ENCODE measurements at regions of chr4 and their contacts with region 1.

Region 1: GRCh38 chr4:98995183-98996055 is at the start of gene METAP1:
- DNase-seq: peak; percentile 94

Region 2: GRCh38 chr4:98928505-98929340 is 66.7 kb before region 1 on chr4 and contains the start of gene EIF4E:
- CTCF ChIA-PET with region 1: interaction called, 4 read pairs
- POLR2A ChIA-PET with region 1: interaction called, 10 read pairs
- DNase-seq: peak; percentile 93

Region 3: DNA sequence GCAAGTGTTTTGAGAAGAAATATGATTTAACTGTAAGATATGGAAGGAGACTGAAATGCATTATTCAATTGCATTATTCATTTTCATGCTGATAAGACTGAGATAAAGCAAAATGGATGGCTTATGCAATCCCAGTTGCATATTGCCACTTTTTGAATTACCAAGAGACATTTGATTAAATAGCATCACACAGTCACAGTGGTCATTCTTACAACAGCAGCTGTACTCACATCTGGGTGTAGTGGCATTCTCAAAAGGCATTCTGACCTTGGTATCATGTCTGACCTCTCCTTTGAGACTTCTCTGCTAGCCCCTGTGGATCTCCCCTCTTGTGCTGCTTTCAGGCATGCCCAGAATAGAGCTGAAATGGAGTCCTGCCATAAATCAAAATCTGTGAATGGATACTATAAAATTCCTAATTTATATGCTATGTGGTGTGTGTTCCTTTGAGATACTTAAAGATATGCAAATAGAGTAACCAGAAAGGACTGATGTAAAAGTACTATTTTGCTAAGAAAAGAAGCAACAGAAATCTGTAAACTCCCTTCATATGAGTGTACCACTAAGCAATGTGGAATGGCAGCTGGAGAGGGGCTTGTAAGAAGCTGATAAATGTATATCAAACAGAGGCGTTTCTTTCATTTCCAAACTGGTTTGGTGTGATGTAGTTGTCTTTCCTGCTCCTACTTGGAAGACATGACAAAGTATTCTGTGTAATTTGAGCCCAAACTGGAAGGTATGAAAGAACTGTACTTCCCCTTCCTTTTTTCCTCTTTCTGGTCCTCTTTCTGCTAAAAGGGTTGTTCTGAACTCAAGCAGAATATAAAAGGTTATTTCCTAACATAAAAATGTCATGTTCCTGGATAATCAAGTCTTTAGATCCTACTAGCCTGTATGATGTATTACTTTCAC is 25.3 kb before region 1 on chr4:
- CTCF ChIA-PET with region 1: no interaction called
- POLR2A ChIA-PET with region 1: no interaction called
- DNase-seq: no peak

Region 4: DNA sequence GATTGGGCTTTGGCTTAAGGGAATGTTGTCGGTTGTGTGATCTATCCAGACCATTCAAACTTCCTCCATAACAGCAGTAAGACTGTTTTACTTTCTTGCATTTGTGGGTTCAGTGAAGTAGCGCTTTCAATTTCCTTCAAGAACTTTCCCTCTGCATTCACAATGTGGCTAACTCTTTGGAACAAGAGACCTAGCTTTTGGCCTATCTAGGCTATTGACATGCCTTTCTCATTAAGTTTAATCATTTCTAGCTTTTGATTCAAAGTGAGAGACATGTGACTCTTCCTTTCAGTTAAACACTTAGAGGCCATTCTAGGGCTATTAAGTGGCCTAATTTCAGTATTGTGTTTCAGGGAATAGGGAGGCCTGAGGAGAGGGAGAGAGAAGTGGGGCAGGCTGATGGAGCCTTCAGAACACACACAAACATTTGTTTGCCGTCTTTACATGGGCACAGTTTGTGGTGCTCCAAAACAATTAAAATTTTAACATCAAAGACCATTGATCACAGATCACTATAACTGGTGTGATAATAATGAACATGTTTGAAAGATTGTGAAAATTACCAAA is 59.1 kb after region 1 on chr4:
- CTCF ChIA-PET with region 1: interaction called, 19 read pairs
- POLR2A ChIA-PET with region 1: interaction called, 8 read pairs
- DNase-seq: no peak